Activated CD4-positive, alpha-beta T cell treated with anti-CD3 and anti-CD28 coated beads, Interleukin-2, amount 10 ng/mL, durations not matched to agents 24 days and 14 days (primary cell): ENCODE measurements at regions of chr10 and their contacts with region 1.

Region 1: GRCh38 chr10:69237528-69238159 is 17.5 kb downstream of the HKDC1 start:
- DNase-seq: peak; percentile 96
- H3K4me3 Mint-ChIP-seq: no peak overlapping the region
- H3K27ac Mint-ChIP-seq: no peak overlapping the region
- H3K4me1 Mint-ChIP-seq: peaks cover 20% of the 10 kb centered on the region
- H3K27me3 Mint-ChIP-seq: no peaks in the 10 kb centered on the region

Region 2: GRCh38 chr10:68997211-68997610 is 240.4 kb before region 1 on chr10:
- intact Hi-C with region 1: no loop called
- DNase-seq: no peak
- H3K4me3 Mint-ChIP-seq: peak overlapping the region; percentile 59
- H3K27ac Mint-ChIP-seq: peak overlapping the region; percentile 93
- H3K4me1 Mint-ChIP-seq: peaks cover 25% of the 10 kb centered on the region
- H3K27me3 Mint-ChIP-seq: no peaks in the 10 kb centered on the region

Region 3: GRCh38 chr10:69182005-69182404 is 55.6 kb before region 1 on chr10:
- intact Hi-C with region 1: no loop called
- DNase-seq: no peak
- H3K4me3 Mint-ChIP-seq: no peak overlapping the region
- H3K27ac Mint-ChIP-seq: no peak overlapping the region
- H3K4me1 Mint-ChIP-seq: peaks cover 32% of the 10 kb centered on the region
- H3K27me3 Mint-ChIP-seq: no peaks in the 10 kb centered on the region

Region 4: DNA sequence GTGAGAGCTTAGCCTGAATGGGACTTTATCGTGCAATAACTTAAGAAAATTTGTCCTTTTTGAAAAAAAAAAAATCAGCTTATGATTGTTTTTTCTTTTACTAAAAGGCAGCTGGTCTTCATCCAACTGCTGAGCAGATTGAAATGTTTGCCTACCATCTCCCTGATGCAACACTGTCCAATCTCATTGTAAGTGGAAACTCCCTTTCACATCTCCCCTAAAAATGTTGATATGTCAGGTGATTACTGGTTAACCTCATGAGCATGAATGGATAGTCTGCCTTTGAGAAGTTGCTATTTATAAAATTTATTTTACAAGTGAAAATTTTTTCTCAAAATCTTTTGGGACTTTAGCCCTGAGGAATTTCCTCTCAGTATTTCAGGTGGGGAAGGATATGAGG is 35.3 kb before region 1 on chr10:
- intact Hi-C with region 1: no loop called
- DNase-seq: peak; percentile 77
- H3K4me3 Mint-ChIP-seq: peak overlapping the region; percentile 62
- H3K27ac Mint-ChIP-seq: peak overlapping the region; percentile 66
- H3K4me1 Mint-ChIP-seq: peaks cover 43% of the 10 kb centered on the region
- H3K27me3 Mint-ChIP-seq: no peaks in the 10 kb centered on the region

Region 5: DNA sequence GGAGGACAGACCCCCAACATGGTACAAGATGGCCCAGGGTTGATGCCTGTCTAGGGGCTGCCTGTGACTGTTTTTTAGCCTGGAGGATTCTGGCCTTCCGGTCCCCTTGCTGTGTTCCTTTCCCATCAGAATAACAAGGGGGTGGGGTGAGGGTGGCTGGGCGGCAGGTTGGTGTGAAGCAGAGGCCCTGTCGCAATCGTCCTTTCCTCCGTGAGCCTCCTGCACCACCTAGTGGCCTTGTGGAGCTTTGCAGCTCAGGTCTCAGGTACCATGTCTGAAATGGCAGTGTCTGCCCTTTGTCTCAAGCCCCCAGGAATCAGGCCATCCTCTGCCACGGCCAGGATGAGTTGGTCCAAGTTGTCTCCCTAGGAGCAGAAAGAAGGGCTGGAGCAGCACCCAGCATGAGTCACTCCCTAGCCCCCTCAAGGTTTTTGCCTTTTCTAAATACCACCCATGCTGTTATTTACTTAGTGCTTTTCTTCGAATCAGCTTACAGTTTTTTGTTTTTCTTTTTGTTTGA is 154.9 kb after region 1 on chr10:
- intact Hi-C with region 1: loop called (anchors 1 kb)
- DNase-seq: peak; percentile 95
- H3K4me3 Mint-ChIP-seq: no peak overlapping the region
- H3K27ac Mint-ChIP-seq: peak overlapping the region; percentile 67
- H3K4me1 Mint-ChIP-seq: peaks cover 27% of the 10 kb centered on the region
- H3K27me3 Mint-ChIP-seq: no peaks in the 10 kb centered on the region

Region 6: DNA sequence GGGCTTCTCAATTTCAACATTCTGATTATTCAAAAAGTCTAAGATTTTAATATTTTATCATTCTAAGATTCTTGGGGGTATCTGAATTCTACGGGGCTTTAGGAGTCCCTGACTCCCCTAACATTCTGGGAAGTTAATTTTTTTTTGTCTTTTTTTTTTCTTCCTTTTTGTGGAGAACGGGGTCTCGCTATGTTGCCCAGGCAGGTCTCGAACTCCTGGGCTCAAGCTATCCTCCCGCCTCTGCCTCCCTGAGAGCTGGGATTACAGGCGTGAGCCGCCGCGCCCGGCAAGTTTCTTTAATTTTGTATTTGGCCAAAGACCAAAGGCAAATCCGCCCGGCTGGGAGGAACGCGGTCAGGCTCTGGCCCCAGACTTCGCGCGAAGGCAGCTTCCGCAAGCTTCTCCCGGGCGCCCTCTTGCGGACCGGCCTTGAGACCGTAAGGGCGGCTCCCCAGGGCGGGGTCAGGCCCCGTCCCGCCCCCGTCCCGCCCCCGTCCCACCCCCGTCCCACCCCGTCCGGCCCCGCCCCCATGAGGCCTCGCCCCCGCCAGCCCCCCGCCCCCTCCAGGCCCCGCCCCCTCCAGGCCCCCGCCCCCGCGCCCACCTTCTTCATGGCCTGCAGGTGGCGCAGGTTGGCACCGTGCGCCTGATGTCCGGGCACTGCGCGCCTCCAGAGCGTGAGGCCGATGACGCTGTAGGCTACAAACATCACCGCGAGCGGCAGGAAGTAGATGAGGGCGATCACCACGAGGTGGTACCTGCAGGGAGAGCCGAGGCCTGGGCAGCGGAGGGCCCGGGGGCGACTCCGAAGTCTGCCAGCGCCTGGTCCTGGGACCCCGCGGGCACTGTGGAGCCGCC is 170.9 kb after region 1 on chr10:
- intact Hi-C with region 1: loop called (anchors 1 kb)
- DNase-seq: peak; percentile 96
- H3K4me3 Mint-ChIP-seq: peak overlapping the region; percentile 80
- H3K27ac Mint-ChIP-seq: peak overlapping the region; percentile 90
- H3K4me1 Mint-ChIP-seq: peaks cover 20% of the 10 kb centered on the region
- H3K27me3 Mint-ChIP-seq: no peaks in the 10 kb centered on the region